ENCODE measurements at regions of chr19 and their contacts with region 1.

Region 1: DNA sequence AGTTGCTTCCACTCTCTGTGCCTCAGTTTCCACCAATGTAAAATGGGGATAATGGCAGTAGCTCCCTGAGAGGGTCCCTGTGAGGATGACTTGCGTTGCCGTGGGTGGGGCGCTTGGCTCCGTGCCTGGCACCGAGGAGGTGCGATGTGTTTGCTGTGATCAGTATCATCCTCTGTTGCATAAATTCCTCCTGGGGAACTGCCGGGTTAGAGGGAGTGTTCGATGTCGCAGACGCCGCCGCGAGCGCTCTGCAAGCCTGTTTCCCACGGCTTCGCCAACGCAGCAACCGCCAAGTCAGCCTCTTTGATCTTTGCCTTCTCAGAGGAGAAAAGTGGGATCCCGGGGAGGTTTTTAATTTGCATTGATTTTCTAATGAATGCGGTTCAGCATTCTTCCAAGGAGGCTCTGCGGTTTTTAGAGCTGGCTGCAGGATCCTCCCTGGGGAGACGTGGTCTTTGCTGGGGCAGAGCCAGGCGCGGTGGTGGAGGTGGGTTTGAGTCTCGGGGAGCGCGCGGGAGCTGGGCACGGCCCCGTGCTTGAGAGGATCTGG is 7.6 kb downstream of the GPR32 start:
- DNase-seq: no peak
- ATAC-seq: no peak
- H3K4me3 ChIP-seq: no peak overlapping the region
- H3K27ac ChIP-seq: no peak overlapping the region
- H3K4me1 ChIP-seq: no peaks in the 10 kb centered on the region
- H3K27me3 ChIP-seq: peaks cover 0 to 31% of the 10 kb centered on the region in 2 experiments; a peak in 3 of 5 replicates
- CTCF ChIP-seq: no peak
- EP300 ChIP-seq: no peak
- POLR2A ChIP-seq: no peak
- RAD21 ChIP-seq: no peak

Region 2: DNA sequence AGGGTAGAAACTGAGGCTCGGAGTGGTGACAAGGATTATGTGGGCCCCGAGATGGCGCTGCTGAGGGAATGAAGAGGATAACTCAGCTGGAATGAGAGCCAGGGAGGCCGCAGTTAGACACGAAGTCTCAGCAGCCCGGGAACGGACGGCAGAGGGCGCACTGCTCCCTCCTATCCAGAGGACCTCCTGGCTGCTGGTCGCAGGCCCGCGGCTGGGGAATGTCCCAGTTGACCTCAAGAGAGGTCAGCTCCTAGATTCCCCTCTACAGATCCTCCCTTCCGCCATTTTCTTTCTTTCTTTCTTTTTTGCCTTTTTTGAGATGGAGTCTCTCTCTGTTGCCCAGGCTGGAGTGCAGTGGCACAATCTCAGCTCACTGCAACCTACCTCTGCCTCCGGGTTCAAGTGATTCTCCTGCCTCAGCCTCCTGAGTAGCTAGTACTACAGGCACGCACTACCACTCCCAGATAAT is 240.0 kb before region 1 on chr19:
- CTCF ChIA-PET with region 1: interaction called, 14 read pairs
- POLR2A ChIA-PET with region 1: no interaction called
- in situ Hi-C with region 1: loop called (anchors 10 kb)
- intact Hi-C with region 1: no loop called
- DNase-seq: peak; percentile 65
- ATAC-seq: peak; percentile 93
- H3K4me3 ChIP-seq: no peak overlapping the region
- H3K27ac ChIP-seq: no peak overlapping the region
- H3K4me1 ChIP-seq: no peaks in the 10 kb centered on the region
- H3K27me3 ChIP-seq: peaks cover 0 to 14% of the 10 kb centered on the region in 2 experiments; a peak in 1 of 5 replicates
- CTCF ChIP-seq: peak; percentile 85
- EP300 ChIP-seq: no peak
- POLR2A ChIP-seq: no peak
- RAD21 ChIP-seq: peak; percentile 87

Region 3: GRCh38 chr19:50547385-50548190 is 230.2 kb before region 1 on chr19:
- CTCF ChIA-PET with region 1: no interaction called
- POLR2A ChIA-PET with region 1: no interaction called
- in situ Hi-C with region 1: loop called (anchors 10 kb)
- intact Hi-C with region 1: no loop called
- DNase-seq: no peak
- ATAC-seq: no peak
- H3K4me3 ChIP-seq: no peak overlapping the region
- H3K27ac ChIP-seq: no peak overlapping the region
- H3K4me1 ChIP-seq: no peaks in the 10 kb centered on the region
- H3K27me3 ChIP-seq: peaks cover 3 to 34% of the 10 kb centered on the region in 2 experiments; a peak in 4 of 5 replicates
- CTCF ChIP-seq: 0 out of 2 replicates have a peak, but pooled peaks have one; percentile 17
- EP300 ChIP-seq: no peak
- POLR2A ChIP-seq: no peak
- RAD21 ChIP-seq: no peak

Region 4: DNA sequence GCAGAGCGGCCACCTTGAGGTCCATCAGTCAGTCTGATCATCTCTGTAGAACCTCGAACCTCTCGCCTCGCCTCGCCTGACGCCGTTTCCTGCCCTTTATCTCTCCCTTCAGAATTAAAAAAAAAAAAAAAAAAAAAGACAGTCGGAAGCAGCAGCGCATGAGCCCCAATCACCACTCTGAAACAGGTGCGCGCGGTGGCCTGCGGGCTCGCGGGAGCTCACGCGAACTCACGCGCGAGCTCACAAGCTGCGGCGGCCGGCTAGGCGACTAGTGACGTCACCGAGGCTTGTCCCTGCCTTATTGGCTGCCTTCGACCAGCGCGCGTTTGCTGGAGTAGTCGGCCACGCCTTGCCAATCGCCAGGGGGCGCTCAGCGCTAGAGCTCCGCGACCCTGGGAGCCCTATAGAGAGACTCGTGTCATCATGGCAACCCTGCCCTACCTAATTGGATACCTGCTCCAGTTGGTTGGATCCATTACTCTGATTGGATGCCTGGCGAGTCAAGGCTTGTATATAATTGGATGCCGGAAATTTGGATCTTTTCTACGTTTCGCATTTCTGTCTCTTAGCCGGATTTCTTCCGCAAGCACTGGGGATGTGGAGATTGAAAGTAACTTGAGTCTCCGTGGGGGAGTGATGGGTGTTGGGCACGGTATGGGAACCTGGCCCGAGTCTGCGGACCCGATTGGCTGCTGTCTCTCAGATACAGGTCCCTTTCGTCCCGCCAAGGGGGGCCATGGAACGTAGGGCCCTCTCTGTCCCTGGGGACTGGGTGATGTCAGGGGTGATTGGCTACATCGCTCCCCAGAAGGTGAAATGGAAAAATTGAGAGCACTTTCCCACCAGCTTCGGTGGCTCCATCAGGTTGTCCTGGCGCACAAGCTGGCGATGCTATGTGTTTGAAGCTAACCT is 169.7 kb before region 1 on chr19:
- CTCF ChIA-PET with region 1: no interaction called
- POLR2A ChIA-PET with region 1: no interaction called
- in situ Hi-C with region 1: loop called (anchors 10 kb)
- intact Hi-C with region 1: no loop called
- DNase-seq: peak; percentile 31
- ATAC-seq: peak; percentile 67
- H3K4me3 ChIP-seq: no peak overlapping the region
- H3K27ac ChIP-seq: no peak overlapping the region
- H3K4me1 ChIP-seq: no peaks in the 10 kb centered on the region
- H3K27me3 ChIP-seq: no peaks in the 10 kb centered on the region
- CTCF ChIP-seq: peak; percentile 62
- EP300 ChIP-seq: no peak
- POLR2A ChIP-seq: no peak
- RAD21 ChIP-seq: peak; percentile 29; the same call in 1 of the 2 replicates

Region 5: DNA sequence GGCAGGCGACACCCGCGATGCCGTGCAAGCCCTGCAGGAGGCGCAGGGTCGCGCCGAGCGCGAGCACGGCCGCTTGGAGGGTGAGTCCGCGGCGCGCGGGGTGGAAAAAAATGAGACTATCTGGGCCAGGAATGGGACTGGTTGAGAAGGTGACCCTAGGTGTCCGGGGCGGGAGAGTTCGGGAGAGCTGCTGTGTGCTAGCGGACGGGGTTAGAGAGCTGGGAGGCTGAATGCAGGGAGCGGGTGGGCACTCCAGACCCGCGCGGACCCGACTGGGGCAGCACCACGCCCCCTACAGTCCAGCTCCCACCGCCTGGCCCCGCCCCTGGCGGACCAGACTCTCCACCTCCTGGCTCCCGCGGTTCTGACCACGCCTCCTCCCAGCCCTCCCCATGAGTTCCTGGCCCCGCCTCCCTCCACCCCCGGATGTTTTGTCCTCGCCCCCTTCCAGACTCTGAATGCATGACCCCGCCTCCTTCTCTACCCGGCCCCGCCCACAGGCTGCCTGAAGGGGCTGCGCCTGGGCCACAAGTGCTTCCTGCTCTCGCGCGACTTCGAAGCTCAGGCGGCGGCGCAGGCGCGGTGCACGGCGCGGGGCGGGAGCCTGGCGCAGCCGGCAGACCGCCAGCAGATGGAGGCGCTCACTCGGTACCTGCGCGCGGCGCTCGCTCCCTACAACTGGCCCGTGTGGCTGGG is 53.2 kb before region 1 on chr19:
- CTCF ChIA-PET with region 1: no interaction called
- POLR2A ChIA-PET with region 1: no interaction called
- in situ Hi-C with region 1: no loop called
- intact Hi-C with region 1: loop called (anchors 5 kb)
- DNase-seq: peak; percentile 38
- ATAC-seq: peak; percentile 80
- H3K4me3 ChIP-seq: peak overlapping the region; percentile 34 to 69 (median 43); a peak in 5 of 6 replicates
- H3K27ac ChIP-seq: no peak overlapping the region
- H3K4me1 ChIP-seq: no peaks in the 10 kb centered on the region
- H3K27me3 ChIP-seq: peaks cover 9 to 50% of the 10 kb centered on the region in 2 experiments
- CTCF ChIP-seq: peak; percentile 73
- EP300 ChIP-seq: no peak
- POLR2A ChIP-seq: no peak
- RAD21 ChIP-seq: peak; percentile 68

Region 6: DNA sequence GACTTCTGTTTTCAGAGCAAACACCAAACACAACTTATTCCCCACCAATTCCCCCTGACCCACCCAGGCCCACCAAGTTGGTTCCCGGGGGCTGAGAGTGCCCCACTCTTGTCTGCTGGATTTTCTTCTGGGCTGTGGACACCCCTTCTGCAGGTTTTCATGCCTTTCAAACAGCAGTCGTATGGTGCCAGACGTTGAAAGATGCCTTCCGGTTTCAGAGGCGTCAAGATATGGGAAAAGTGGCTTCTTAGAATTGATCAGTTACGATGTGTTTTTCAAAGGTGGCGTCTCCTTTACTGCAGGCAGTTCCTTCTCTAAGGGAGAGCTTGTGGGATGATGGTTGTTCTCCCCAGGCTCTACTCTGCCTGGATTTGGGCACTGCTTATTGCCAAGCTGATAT is 42.0 kb before region 1 on chr19:
- CTCF ChIA-PET with region 1: no interaction called
- POLR2A ChIA-PET with region 1: no interaction called
- in situ Hi-C with region 1: no loop called
- intact Hi-C with region 1: no loop called
- DNase-seq: no peak
- ATAC-seq: no peak
- H3K4me3 ChIP-seq: no peak overlapping the region
- H3K27ac ChIP-seq: no peak overlapping the region
- H3K4me1 ChIP-seq: no peaks in the 10 kb centered on the region
- H3K27me3 ChIP-seq: peaks cover 2 to 8% of the 10 kb centered on the region in 2 experiments; a peak in 2 of 5 replicates
- CTCF ChIP-seq: no peak
- EP300 ChIP-seq: no peak
- POLR2A ChIP-seq: no peak
- RAD21 ChIP-seq: no peak